CD4-positive, alpha-beta T cell (primary cell): ENCODE measurements at regions of chr6 and their contacts with region 1.

Region 1: GRCh38 chr6:12545619-12546409 is 170.8 kb upstream of the PHACTR1 start:
- DNase-seq: no peak
- ATAC-seq: no peak
- H3K4me3 ChIP-seq: no peak overlapping the region
- H3K4me3 Mint-ChIP-seq: no peak overlapping the region
- H3K27ac ChIP-seq: no peak overlapping the region
- H3K27ac Mint-ChIP-seq: no peak overlapping the region
- H3K4me1 ChIP-seq: no peaks in the 10 kb centered on the region
- H3K4me1 Mint-ChIP-seq: no peaks in the 10 kb centered on the region
- H3K27me3 ChIP-seq: no peaks in the 10 kb centered on the region
- H3K27me3 Mint-ChIP-seq: peaks cover 7% of the 10 kb centered on the region
- CTCF ChIP-seq: no peak

Region 2: GRCh38 chr6:13194852-13195251 is 649.0 kb after region 1 on chr6:
- CTCF ChIA-PET with region 1: no interaction called
- POLR2A ChIA-PET with region 1: no interaction called
- intact Hi-C with region 1: loop called in 1 of 2 experiments (anchors 10 kb)
- DNase-seq: peak in 4 of 14 experiments; percentile 4 to 48 (median 28)
- ATAC-seq: no peak
- H3K4me3 ChIP-seq: no peak overlapping the region
- H3K4me3 Mint-ChIP-seq: no peak overlapping the region
- H3K27ac ChIP-seq: no peak overlapping the region
- H3K27ac Mint-ChIP-seq: no peak overlapping the region
- H3K4me1 ChIP-seq: no peaks in the 10 kb centered on the region
- H3K4me1 Mint-ChIP-seq: no peaks in the 10 kb centered on the region
- H3K27me3 ChIP-seq: no peaks in the 10 kb centered on the region
- H3K27me3 Mint-ChIP-seq: peaks cover 5% of the 10 kb centered on the region
- CTCF ChIP-seq: peak; percentile 11